Activated T-helper 1 cell treated with anti-CD3 and anti-CD28 coated beads, Interleukin-12 subunit alpha, Interleukin-12 subunit beta, Interleukin-2, Interleukin-4 antibody, amounts not matched to agents 30 ng/mL and 10 ng/mL and 1 ng/mL, durations not matched to agents 14 hours and 24 hours and 36 hours (primary cell): ENCODE measurements at regions of chr11 and their contacts with region 1.

Region 1: DNA sequence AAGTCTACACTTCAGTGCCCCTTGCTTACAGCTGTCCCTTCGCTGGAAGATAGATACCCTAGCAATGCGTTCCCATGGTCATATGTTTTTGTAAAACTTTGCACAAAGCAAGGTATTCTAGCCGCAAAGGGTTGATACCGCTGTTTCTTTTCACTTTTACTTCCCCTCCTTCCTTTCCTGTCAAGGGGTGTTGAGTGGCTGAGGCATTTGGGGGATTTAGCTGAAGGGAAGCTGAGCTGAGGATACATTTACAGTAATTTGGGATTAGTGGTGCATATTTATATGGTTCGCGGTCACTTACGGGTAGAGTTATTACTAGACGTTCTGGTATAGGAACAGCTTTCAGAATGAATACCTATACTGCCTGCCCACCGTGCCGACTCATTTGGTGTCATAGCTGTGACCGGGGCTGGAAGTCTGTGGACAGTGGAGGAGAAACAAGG is 86.9 kb upstream of the WNT11 start:
- DNase-seq: peak; percentile 3
- H3K4me3 Mint-ChIP-seq: peak overlapping the region; percentile 16
- H3K27ac Mint-ChIP-seq: peak overlapping the region; percentile 58
- H3K4me1 Mint-ChIP-seq: peaks cover 28% of the 10 kb centered on the region
- H3K27me3 Mint-ChIP-seq: no peaks in the 10 kb centered on the region

Region 2: GRCh38 chr11:76235233-76236091 is 57.7 kb before region 1 on chr11:
- intact Hi-C with region 1: loop called (anchors 5 kb)
- DNase-seq: peak; percentile 85
- H3K4me3 Mint-ChIP-seq: peak overlapping the region; percentile 92
- H3K27ac Mint-ChIP-seq: peak overlapping the region; percentile 84
- H3K4me1 Mint-ChIP-seq: peaks cover 50% of the 10 kb centered on the region
- H3K27me3 Mint-ChIP-seq: peaks cover 30% of the 10 kb centered on the region